Aorta (tissue), 5 donors: ENCODE measurements at regions of chr18 and their contacts with region 1.

Region 1: DNA sequence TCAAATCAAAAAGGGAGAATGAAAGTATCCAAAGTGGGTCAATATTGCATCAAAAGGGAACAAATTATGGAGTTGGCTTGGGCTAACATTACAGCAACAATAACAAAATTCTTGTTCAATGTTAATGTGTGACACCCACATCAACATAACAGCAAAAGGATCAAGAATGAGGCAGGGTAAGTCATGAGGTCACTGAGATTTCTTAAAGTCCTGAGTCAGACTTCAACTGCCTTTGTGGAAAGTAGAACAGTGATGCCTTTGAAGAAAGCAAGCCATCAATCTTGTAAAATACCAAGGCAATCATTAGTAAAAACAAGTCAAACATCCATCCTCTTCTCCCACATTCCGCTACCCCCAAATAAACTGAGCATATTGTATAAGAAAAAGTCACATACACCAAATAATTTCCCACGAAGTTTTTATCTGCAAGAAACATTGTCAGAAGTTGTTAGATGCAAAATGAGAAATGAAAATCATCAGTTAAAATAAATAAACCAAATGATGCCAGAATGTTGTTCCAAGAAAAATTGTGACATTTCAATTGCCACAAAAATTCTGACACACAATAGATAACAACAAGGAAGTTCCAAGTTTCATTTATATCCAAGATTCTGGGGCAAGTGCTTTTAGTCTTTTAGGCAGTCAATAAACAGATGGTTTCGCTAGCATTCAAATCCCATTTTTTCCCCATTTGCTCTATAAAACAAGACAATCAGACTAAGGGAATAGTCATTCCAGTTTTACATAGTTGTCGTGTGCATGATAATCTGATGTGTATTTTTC is 216.1 kb upstream of the SETBP1 start:
- DNase-seq: no peak
- ATAC-seq: peak; percentile 59
- H3K4me3 ChIP-seq: no peak overlapping the region
- H3K27ac ChIP-seq: no peak overlapping the region
- H3K4me1 ChIP-seq: peaks cover 0 to 7% of the 10 kb centered on the region in 2 donors
- H3K27me3 ChIP-seq: no peaks in the 10 kb centered on the region

Region 2: GRCh38 chr18:44482761-44483160 is 18.2 kb after region 1 on chr18:
- intact Hi-C with region 1: loop called in 1 of 2 experiments (anchors 2 kb)
- DNase-seq: no peak
- ATAC-seq: no peak
- H3K4me3 ChIP-seq: no peak overlapping the region
- H3K27ac ChIP-seq: no peak overlapping the region
- H3K4me1 ChIP-seq: no peaks in the 10 kb centered on the region
- H3K27me3 ChIP-seq: peaks cover 0 to 2% of the 10 kb centered on the region in 2 donors